GM12878 (cell line): ENCODE measurements at regions of chr2 and their contacts with region 1.

Region 1: GRCh38 chr2:108988796-108989713 is at the start of gene EDAR:
- DNase-seq: no peak
- ATAC-seq: peak; percentile 93
- H3K4me3 ChIP-seq: no peak within 1 kb of the TSS
- H3K27ac ChIP-seq: no peak within 1 kb of the TSS
- H3K4me1 ChIP-seq: no peaks in the 10 kb centered on the region
- H3K27me3 ChIP-seq: peaks cover 0 to 1% of the 10 kb centered on the region in 2 experiments; a peak in 2 of 4 replicates
- CTCF ChIP-seq: peak; percentile 44 to 55 (median 52)
- EP300 ChIP-seq: no peak
- POLR2A ChIP-seq: no peak
- RAD21 ChIP-seq: peak; percentile 47; the same call in 1 of the 2 replicates
- polyA plus RNA-seq, gene EDAR: not detected

Region 2: DNA sequence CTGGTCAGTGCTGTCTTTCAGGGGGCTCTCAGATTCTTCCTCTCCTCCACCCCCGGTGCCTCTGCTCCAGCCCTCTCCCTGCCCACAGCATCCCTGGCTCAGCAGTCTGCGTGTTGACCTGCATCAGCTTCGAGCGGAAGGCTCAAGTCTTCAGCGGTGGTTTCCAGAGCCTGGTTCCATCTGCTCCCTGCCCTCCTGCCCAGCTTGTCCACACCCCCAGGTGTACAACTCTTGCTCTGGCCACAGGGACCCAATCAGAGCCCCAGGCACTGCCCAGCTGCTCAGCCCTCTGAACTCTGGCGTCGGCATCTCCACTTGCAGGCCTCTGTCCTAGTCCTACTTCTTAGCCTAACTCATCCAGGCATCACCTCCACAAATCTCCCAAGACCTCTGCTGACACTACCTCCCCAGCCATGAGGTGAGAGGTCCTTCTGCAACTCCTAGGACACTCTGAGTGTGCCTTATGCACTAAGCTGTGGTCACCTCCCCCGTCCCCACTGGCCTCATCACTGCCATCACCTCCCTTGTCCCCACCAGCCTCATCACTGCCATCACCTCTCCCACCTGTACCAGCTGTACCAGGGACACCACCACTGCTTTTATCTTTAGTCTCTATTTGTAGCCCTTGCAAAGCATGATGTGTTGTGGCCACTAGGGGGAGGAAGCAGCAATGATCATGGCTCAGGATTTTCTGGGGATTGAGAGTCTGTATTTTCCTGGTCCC is 61.0 kb before region 1 on chr2:
- CTCF ChIA-PET with region 1: no interaction called
- POLR2A ChIA-PET with region 1: no interaction called
- RAD21 ChIA-PET with region 1: no interaction called
- SMC1A ChIA-PET with region 1: no interaction called
- in situ Hi-C with region 1: no loop called
- intact Hi-C with region 1: loop called (anchors 5 kb)
- DNase-seq: no peak
- ATAC-seq: peak; percentile 89
- H3K4me3 ChIP-seq: no peak overlapping the region
- H3K27ac ChIP-seq: no peak overlapping the region
- H3K4me1 ChIP-seq: no peaks in the 10 kb centered on the region
- H3K27me3 ChIP-seq: peaks cover 0 to 2% of the 10 kb centered on the region in 2 experiments; a peak in 2 of 4 replicates
- CTCF ChIP-seq: peak; percentile 73 to 87 (median 79)
- EP300 ChIP-seq: no peak
- POLR2A ChIP-seq: no peak
- RAD21 ChIP-seq: peak; percentile 63

Region 3: DNA sequence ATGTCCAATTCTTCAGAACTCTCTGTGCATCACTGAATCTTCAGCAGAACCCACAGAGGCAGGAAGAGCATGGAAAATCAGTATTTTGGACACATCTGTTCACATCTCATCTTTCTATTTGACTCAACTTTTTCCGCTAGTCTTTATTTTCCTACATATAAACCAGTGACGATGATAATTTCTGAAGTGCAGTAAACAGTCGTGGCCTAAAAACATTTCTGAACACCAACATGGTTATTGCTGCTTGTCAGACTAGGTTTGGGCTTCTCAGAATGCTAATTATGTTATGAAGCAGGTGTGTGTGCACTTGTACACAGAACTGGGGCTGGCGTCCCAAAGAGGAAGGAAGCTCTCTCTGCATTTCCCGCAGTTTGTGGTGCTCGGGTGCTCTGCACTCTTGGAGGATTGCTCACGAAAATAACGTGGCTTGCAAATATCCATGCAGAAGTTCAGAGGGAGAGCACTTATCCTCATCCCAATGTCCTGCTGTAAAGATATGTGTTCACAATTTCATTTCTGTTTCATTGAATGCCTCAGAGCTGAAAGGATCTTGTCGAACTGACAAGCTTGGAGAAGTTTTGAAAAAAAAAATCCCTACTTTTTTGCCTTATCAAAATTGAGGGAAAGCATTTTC is 50.9 kb before region 1 on chr2:
- CTCF ChIA-PET with region 1: no interaction called
- POLR2A ChIA-PET with region 1: no interaction called
- RAD21 ChIA-PET with region 1: no interaction called
- SMC1A ChIA-PET with region 1: no interaction called
- in situ Hi-C with region 1: no loop called
- intact Hi-C with region 1: no loop called
- DNase-seq: no peak
- ATAC-seq: no peak
- H3K4me3 ChIP-seq: no peak overlapping the region
- H3K27ac ChIP-seq: no peak overlapping the region
- H3K4me1 ChIP-seq: no peaks in the 10 kb centered on the region
- H3K27me3 ChIP-seq: no peaks in the 10 kb centered on the region
- CTCF ChIP-seq: no peak
- EP300 ChIP-seq: no peak
- POLR2A ChIP-seq: no peak
- RAD21 ChIP-seq: no peak